MCF 10A (cell line): ENCODE measurements at regions of chr3 and their contacts with region 1.

Region 1: GRCh38 chr3:153927107-153927506 is 194.1 kb upstream of the ARHGEF26 start:
- DNase-seq: peak; percentile 72
- H3K4me3 Mint-ChIP-seq: no peak overlapping the region
- H3K27ac Mint-ChIP-seq: no peak overlapping the region
- H3K4me1 Mint-ChIP-seq: no peaks in the 10 kb centered on the region
- H3K27me3 Mint-ChIP-seq: no peaks in the 10 kb centered on the region
- CTCF ChIP-seq: peak; percentile 11

Region 2: GRCh38 chr3:153026026-153026425 is 901.1 kb before region 1 on chr3:
- CTCF ChIA-PET with region 1: no interaction called
- POLR2A ChIA-PET with region 1: no interaction called
- intact Hi-C with region 1: loop called (anchors 1 kb)
- DNase-seq: peak; percentile 57
- H3K4me3 Mint-ChIP-seq: no peak overlapping the region
- H3K27ac Mint-ChIP-seq: no peak overlapping the region
- H3K4me1 Mint-ChIP-seq: no peaks in the 10 kb centered on the region
- H3K27me3 Mint-ChIP-seq: no peaks in the 10 kb centered on the region
- CTCF ChIP-seq: peak; percentile 62

Region 3: DNA sequence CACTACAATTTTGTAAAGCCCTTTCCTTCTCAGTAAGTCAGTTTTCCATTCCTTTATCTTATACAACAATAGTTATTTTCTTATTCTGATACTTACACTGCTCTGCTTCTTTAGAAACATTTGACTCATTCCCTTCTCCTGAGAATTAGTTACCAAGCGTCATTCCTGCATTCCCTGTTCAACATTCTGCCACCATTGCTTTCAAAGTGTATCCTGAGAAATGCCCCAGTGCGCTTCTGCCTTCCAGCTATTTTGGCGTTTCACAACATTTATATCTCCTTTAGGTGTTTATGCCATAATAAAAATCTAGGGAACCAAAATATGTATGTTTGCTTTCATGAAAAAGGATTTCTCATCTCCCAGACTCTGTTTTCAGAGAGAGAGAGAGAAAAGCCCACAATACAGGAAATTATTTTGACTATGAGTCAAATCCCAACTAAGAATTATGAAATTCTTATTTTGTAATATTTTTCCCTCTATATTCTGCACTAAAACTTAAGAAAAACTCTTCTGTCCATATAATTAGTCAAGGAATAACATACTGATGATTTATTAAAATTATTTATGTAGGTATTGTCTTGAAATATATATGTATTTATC is 883.3 kb before region 1 on chr3:
- CTCF ChIA-PET with region 1: no interaction called
- POLR2A ChIA-PET with region 1: no interaction called
- intact Hi-C with region 1: loop called (anchors 1 kb)
- DNase-seq: peak; percentile 86
- H3K4me3 Mint-ChIP-seq: peak overlapping the region; percentile 63
- H3K27ac Mint-ChIP-seq: peak overlapping the region; percentile 82
- H3K4me1 Mint-ChIP-seq: peaks cover 8% of the 10 kb centered on the region
- H3K27me3 Mint-ChIP-seq: no peaks in the 10 kb centered on the region
- CTCF ChIP-seq: no peak

Region 4: GRCh38 chr3:153210668-153211067 is 716.4 kb before region 1 on chr3:
- CTCF ChIA-PET with region 1: no interaction called
- POLR2A ChIA-PET with region 1: no interaction called
- intact Hi-C with region 1: no loop called
- DNase-seq: peak; percentile 85
- H3K4me3 Mint-ChIP-seq: no peak overlapping the region
- H3K27ac Mint-ChIP-seq: no peak overlapping the region
- H3K4me1 Mint-ChIP-seq: peaks cover 16% of the 10 kb centered on the region
- H3K27me3 Mint-ChIP-seq: no peaks in the 10 kb centered on the region
- CTCF ChIP-seq: no peak

Region 5: DNA sequence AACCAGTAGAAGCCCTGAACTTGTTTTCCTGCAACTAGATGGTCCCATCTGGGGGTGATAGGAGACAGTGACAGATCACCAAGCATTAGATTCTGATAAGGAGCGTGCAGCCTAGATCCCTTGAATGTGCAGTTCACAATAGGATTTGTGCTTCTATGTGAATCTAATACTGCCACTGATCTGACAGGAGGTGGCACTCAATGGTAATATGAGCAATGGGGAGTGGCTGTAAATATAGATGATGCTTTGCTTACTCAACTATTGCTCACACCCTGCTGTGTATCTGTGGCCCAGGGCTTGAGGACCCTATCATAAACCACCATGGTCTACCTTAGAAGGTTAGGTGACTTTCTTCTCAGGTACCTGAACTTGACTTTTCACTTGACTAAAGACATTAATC is 223.0 kb before region 1 on chr3:
- CTCF ChIA-PET with region 1: interaction called, 3 read pairs
- POLR2A ChIA-PET with region 1: no interaction called
- intact Hi-C with region 1: loop called (anchors 1 kb)
- DNase-seq: peak; percentile 20
- H3K4me3 Mint-ChIP-seq: no peak overlapping the region
- H3K27ac Mint-ChIP-seq: no peak overlapping the region
- H3K4me1 Mint-ChIP-seq: no peaks in the 10 kb centered on the region
- H3K27me3 Mint-ChIP-seq: no peaks in the 10 kb centered on the region
- CTCF ChIP-seq: peak; percentile 8

Region 6: GRCh38 chr3:153785902-153786301 is 141.2 kb before region 1 on chr3:
- CTCF ChIA-PET with region 1: no interaction called
- POLR2A ChIA-PET with region 1: no interaction called
- intact Hi-C with region 1: loop called (anchors 5 kb)
- DNase-seq: no peak
- H3K4me3 Mint-ChIP-seq: no peak overlapping the region
- H3K27ac Mint-ChIP-seq: no peak overlapping the region
- H3K4me1 Mint-ChIP-seq: no peaks in the 10 kb centered on the region
- H3K27me3 Mint-ChIP-seq: no peaks in the 10 kb centered on the region
- CTCF ChIP-seq: no peak